ENCODE measurements at regions of chr15 and their contacts with region 1.

Region 1: DNA sequence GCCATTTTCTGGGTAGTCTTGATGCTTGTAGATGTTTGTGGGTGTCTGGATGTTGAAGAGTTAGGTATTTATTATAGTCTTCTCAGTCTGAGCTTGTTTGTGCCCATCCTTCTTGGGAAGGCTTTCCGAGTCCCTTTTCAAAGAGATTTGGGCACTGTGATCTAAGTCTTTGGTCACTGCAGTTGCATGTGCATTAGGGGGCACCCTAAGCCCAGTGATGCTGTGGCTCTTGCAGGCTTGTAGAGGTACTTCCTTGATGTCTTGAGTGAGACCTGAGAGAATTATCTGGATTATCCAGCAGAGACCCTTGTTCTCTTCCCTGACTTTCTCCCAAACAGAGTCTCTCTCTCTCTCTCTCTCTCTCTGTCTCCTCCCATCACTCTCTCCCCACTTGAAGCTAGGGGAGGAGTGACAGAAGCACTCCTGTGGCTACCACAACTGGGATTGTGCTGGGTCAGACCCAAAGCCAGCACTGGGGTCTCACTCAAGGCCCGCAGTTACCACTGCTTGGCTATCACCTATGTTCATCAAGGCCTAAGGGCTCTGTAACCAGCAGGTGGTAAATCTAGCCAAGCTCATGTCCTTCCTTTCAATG is 68.5 kb downstream of the TMCO5A start:
- DNase-seq: peak; percentile 75
- H3K4me3 Mint-ChIP-seq: no peak overlapping the region
- H3K27ac Mint-ChIP-seq: no peak overlapping the region
- H3K4me1 Mint-ChIP-seq: peaks cover 4% of the 10 kb centered on the region
- H3K27me3 Mint-ChIP-seq: no peaks in the 10 kb centered on the region
- CTCF ChIP-seq: peak; percentile 90

Region 2: GRCh38 chr15:38362355-38362754 is 359.4 kb after region 1 on chr15:
- CTCF ChIA-PET with region 1: interaction called, 109 read pairs
- POLR2A ChIA-PET with region 1: no interaction called
- intact Hi-C with region 1: no loop called
- DNase-seq: no peak
- H3K4me3 Mint-ChIP-seq: no peak overlapping the region
- H3K27ac Mint-ChIP-seq: no peak overlapping the region
- H3K4me1 Mint-ChIP-seq: no peaks in the 10 kb centered on the region
- H3K27me3 Mint-ChIP-seq: no peaks in the 10 kb centered on the region
- CTCF ChIP-seq: no peak

Region 3: GRCh38 chr15:38389924-38390542 is 387.1 kb after region 1 on chr15:
- CTCF ChIA-PET with region 1: interaction called, 43 read pairs
- POLR2A ChIA-PET with region 1: no interaction called
- intact Hi-C with region 1: loop called (anchors 1 kb)
- DNase-seq: peak; percentile 77
- H3K4me3 Mint-ChIP-seq: no peak overlapping the region
- H3K27ac Mint-ChIP-seq: no peak overlapping the region
- H3K4me1 Mint-ChIP-seq: no peaks in the 10 kb centered on the region
- H3K27me3 Mint-ChIP-seq: no peaks in the 10 kb centered on the region
- CTCF ChIP-seq: peak; percentile 67

Region 4: GRCh38 chr15:38414357-38414756 is 411.4 kb after region 1 on chr15:
- CTCF ChIA-PET with region 1: interaction called, 3 read pairs
- POLR2A ChIA-PET with region 1: no interaction called
- intact Hi-C with region 1: loop called (anchors 1 kb)
- DNase-seq: peak; percentile 70
- H3K4me3 Mint-ChIP-seq: no peak overlapping the region
- H3K27ac Mint-ChIP-seq: no peak overlapping the region
- H3K4me1 Mint-ChIP-seq: no peaks in the 10 kb centered on the region
- H3K27me3 Mint-ChIP-seq: peaks cover 17% of the 10 kb centered on the region
- CTCF ChIP-seq: peak; percentile 80

Measured in MCF 10A (cell line).